ENCODE measurements at regions of chr13 and their contacts with region 1.

Region 1: GRCh38 chr13:36848199-36848982 is 29.4 kb downstream of the RFXAP start:
- DNase-seq: no peak
- H3K4me3 ChIP-seq: no peak overlapping the region
- H3K27ac ChIP-seq: no peak overlapping the region
- H3K27me3 ChIP-seq: no peaks in the 10 kb centered on the region
- CTCF ChIP-seq: peak in 39 of 56 donors; percentile 3 to 54 (median 33)

Region 2: GRCh38 chr13:36420437-36420891 is 427.9 kb before region 1 on chr13:
- intact Hi-C with region 1: loop called in 1 of 2 experiments (anchors 10 kb)
- DNase-seq: peak; percentile 47 to 84 (median 70)
- H3K4me3 ChIP-seq: peak overlapping the region in 1 of 59 donors; percentile 5
- H3K27ac ChIP-seq: no peak overlapping the region
- H3K27me3 ChIP-seq: peaks cover 0 to 9% (median 0%) of the 10 kb centered on the region in 45 donors
- CTCF ChIP-seq: peak; percentile 78 to 97 (median 88)